HCT116 (cell line): ENCODE measurements at regions of chr14 and their contacts with region 1.

Region 1: GRCh38 chr14:64636208-64636979 is 67.8 kb upstream of the PLEKHG3 start:
- DNase-seq: peak; percentile 47
- ATAC-seq: peak; percentile 98
- H3K4me3 ChIP-seq: no peak overlapping the region
- H3K27ac ChIP-seq: no peak overlapping the region
- H3K4me1 ChIP-seq: peaks cover 2 to 8% of the 10 kb centered on the region in 2 experiments; a peak in 2 of 4 replicates
- H3K27me3 ChIP-seq: no peaks in the 10 kb centered on the region
- CTCF ChIP-seq: peak; percentile 78 to 94 (median 79)
- POLR2A ChIP-seq: no peak
- RAD21 ChIP-seq: peak; percentile 87

Region 2: DNA sequence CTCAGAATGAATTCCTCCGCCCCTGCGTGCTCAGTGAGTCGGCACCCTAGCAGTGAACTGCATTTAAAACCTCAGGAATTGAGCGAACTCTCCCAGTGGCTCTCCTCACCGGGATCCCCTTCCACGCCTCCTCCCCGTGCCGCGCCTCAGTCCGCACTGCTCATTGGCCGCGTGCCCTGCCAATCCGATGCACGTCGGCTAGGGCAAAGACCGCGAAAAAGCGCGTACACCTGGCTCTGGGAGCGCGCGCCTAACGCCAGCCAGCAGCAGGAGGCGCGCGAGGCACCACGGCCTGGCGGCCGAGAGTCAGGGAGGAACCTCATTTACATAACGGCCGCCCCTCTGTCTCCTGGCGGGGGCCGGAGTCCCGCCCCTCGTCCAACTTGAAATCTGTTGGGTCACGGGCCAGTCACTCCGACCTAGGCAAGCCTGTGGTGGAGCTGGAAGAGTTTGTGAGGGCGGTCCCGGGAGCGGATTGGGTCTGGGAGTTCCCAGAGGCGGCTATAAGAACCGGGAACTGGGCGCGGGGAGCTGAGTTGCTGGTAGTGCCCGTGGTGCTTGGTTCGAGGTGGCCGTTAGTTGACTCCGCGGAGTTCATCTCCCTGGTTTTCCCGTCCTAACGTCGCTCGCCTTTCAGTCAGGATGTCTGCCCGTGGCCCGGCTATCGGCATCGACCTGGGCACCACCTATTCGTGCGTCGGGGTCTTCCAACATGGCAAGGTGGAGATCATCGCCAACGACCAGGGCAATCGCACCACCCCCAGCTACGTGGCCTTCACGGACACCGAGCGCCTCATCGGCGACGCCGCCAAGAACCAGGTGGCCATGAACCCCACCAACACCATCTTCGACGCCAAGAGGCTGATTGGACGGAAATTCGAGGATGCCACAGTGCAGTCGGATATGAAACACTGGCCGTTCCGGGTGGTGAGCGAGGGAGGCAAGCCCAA is 95.9 kb before region 1 on chr14 and contains the start of gene HSPA2:
- CTCF ChIA-PET with region 1: interaction called, 5 read pairs
- POLR2A ChIA-PET with region 1: no interaction called
- RAD21 ChIA-PET with region 1: no interaction called
- intact Hi-C with region 1: loop called (anchors 10 kb)
- DNase-seq: peak; percentile 94
- ATAC-seq: peak; percentile 94
- H3K4me3 ChIP-seq: peak within 1 kb of the TSS; percentile 38 to 60
- H3K27ac ChIP-seq: peak within 1 kb of the TSS; percentile 36
- H3K4me1 ChIP-seq: peaks cover 3 to 23% of the 10 kb centered on the region in 2 experiments; a peak in 2 of 4 replicates
- H3K27me3 ChIP-seq: no peaks in the 10 kb centered on the region
- CTCF ChIP-seq: peak; percentile 51 to 79 (median 65); a peak in 5 of 6 replicates
- POLR2A ChIP-seq: peak; percentile 72
- RAD21 ChIP-seq: peak; percentile 69
- total RNA-seq, gene HSPA2: 2.5 TPM

Region 3: DNA sequence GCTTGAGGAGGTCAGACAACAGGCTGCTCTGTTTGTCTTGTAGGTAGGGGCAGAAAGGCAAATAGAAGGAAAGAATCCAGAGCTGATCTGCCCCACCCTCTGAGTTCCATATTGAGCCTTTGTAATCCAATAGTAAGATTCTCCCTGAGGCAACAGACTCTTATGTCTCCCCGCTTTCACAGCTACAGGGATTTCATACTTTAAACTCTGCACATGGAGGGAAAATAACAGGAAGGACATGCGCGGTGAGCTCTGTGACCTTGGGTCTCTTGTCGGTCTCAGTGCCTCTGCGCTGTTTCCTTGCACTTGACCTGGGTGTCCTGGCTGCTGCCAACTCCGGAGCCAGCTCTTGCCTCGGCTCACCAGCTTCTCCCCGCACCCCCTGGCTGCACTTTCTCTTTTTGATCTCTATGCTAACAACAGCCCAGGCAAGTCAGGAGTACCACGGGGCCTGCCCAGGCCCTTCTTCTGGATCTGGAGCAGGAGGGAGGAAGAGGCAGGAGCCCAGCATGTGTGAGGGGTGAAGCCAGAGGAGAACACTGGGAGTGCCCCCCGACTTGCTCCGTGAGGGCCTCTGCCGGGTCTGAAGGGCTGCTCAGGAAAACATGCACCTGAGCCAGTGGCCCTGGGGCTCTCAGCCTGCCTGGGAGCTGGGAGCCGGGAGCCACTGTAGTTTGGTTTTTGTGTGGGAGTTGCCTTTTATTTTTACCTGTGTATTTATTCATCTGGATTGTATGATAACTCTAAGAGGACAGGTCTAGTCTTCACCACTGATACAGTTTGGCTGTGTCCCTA is 10.7 kb before region 1 on chr14:
- CTCF ChIA-PET with region 1: interaction called, 14 read pairs
- POLR2A ChIA-PET with region 1: no interaction called
- RAD21 ChIA-PET with region 1: no interaction called
- intact Hi-C with region 1: no loop called
- DNase-seq: no peak
- ATAC-seq: no peak
- H3K4me3 ChIP-seq: no peak overlapping the region
- H3K27ac ChIP-seq: no peak overlapping the region
- H3K4me1 ChIP-seq: no peaks in the 10 kb centered on the region
- H3K27me3 ChIP-seq: no peaks in the 10 kb centered on the region
- CTCF ChIP-seq: no peak
- POLR2A ChIP-seq: no peak
- RAD21 ChIP-seq: no peak

Region 4: DNA sequence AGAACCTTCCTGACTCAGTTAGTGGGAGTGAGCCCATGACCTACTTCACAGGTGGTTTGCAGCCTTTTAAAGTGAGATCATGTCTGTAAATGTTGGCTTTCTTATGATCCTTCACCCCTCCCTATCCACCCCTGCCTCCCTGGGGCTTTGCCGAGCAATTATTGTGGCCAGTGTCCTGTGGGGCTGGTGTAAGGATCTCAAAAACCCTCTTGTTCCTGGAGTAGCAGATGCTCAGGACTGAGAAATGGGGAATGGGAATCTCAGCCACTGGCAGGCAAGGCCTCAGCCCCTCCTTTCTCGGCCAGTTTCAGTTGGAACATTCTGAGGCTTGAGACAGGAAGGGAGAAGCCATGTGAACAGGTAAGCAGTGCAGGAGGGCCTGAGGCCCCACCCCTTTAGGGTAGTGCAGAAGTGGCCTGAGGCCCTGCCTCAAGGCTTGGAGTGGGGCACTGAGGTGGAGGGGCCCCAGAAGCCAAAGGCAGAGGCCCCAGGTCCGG is 121.7 kb after region 1 on chr14:
- CTCF ChIA-PET with region 1: no interaction called
- POLR2A ChIA-PET with region 1: no interaction called
- RAD21 ChIA-PET with region 1: no interaction called
- intact Hi-C with region 1: no loop called
- DNase-seq: no peak
- ATAC-seq: no peak
- H3K4me3 ChIP-seq: no peak overlapping the region
- H3K27ac ChIP-seq: no peak overlapping the region
- H3K4me1 ChIP-seq: peaks cover 42 to 50% of the 10 kb centered on the region in 2 experiments
- H3K27me3 ChIP-seq: no peaks in the 10 kb centered on the region
- CTCF ChIP-seq: no peak
- POLR2A ChIP-seq: no peak
- RAD21 ChIP-seq: no peak